ENCODE measurements at regions of chr6 and their contacts with region 1.

Region 1: DNA sequence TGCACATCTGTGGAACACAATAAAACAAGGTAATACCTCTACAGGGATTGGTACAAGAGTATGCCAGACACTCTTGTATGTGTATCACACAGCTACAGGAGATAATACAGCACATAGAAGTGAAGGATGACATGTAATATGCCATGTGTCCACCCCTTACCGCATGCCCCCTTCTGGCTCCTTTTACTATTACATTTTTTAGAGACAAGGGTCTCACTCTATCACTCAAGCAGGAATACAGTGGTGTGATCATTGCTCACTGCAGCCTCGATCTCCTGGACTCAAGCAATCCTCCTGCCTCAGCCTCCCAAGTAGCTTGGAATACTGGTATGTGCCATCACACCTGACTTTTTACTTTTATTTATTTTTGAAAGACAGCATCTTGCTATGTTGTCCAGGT is 4.2 kb upstream of the NCR3 start:
- DNase-seq: no peak
- H3K4me3 ChIP-seq: no peak overlapping the region
- H3K27ac ChIP-seq: no peak overlapping the region
- H3K4me1 ChIP-seq: no peaks in the 10 kb centered on the region
- H3K27me3 ChIP-seq: no peaks in the 10 kb centered on the region
- CTCF ChIP-seq: peak in 5 of 6 experiments; percentile 16 to 53 (median 38)
- POLR2A ChIP-seq: no peak

Region 2: GRCh38 chr6:31366693-31367470 is 230.1 kb before region 1 on chr6:
- intact Hi-C with region 1: no loop called
- DNase-seq: peak; percentile 88 to 93 (median 90)
- H3K4me3 ChIP-seq: no peak overlapping the region
- H3K27ac ChIP-seq: no peak overlapping the region
- H3K4me1 ChIP-seq: no peaks in the 10 kb centered on the region
- H3K27me3 ChIP-seq: peaks cover 3% of the 10 kb centered on the region
- CTCF ChIP-seq: peak; percentile 91 to 97 (median 96)
- POLR2A ChIP-seq: no peak

Region 3: GRCh38 chr6:31493875-31494694 is 102.9 kb before region 1 on chr6:
- intact Hi-C with region 1: loop called in 1 of 2 experiments (anchors 10 kb)
- DNase-seq: peak; percentile 56 to 90 (median 82)
- H3K4me3 ChIP-seq: peak overlapping the region in 2 of 4 donors; percentile 34 to 69
- H3K27ac ChIP-seq: peak overlapping the region in 3 of 5 donors; percentile 5 to 89 (median 51)
- H3K4me1 ChIP-seq: peaks cover 0 to 9% of the 10 kb centered on the region in 2 donors
- H3K27me3 ChIP-seq: peaks cover 4% of the 10 kb centered on the region
- CTCF ChIP-seq: peak; percentile 45 to 85 (median 75)
- POLR2A ChIP-seq: no peak

Region 4: GRCh38 chr6:31546962-31547726 is 49.9 kb before region 1 on chr6 and contains the start of gene NFKBIL1:
- intact Hi-C with region 1: loop called (anchors 2 to 5 kb)
- DNase-seq: peak; percentile 91 to 98 (median 96)
- H3K4me3 ChIP-seq: peak within 1 kb of the TSS in 2 of 4 donors; percentile 39 to 60
- H3K27ac ChIP-seq: peak within 1 kb of the TSS; percentile 53 to 88 (median 77)
- H3K4me1 ChIP-seq: peaks cover 14 to 33% of the 10 kb centered on the region in 2 donors
- H3K27me3 ChIP-seq: no peaks in the 10 kb centered on the region
- CTCF ChIP-seq: peak in 2 of 6 experiments; percentile 6 to 53
- POLR2A ChIP-seq: peak; percentile 3 to 24
- total RNA-seq, gene NFKBIL1: 15.1 to 33.6 (median 27.9) TPM